Common myeloid progenitor, CD34-positive (primary cell): ENCODE measurements at regions of chr15 and their contacts with region 1.

Region 1: GRCh38 chr15:101088788-101089583 is 162.9 kb downstream of the CHSY1 start:
- DNase-seq: peak; percentile 57 to 70 (median 67)
- H3K4me3 ChIP-seq: peak overlapping the region in 3 of 7 experiments; percentile 33 to 60 (median 42)
- H3K27ac ChIP-seq: no peak overlapping the region
- H3K4me1 ChIP-seq: peaks cover 5 to 38% (median 34%) of the 10 kb centered on the region in 4 experiments
- H3K27me3 ChIP-seq: no peaks in the 10 kb centered on the region

Region 2: GRCh38 chr15:100918034-100918689 is 170.8 kb before region 1 on chr15:
- CTCF ChIA-PET with region 1: no interaction called
- POLR2A ChIA-PET with region 1: no interaction called
- DNase-seq: peak; percentile 77 to 83 (median 81)
- H3K4me3 ChIP-seq: peak overlapping the region; percentile 15 to 91 (median 76)
- H3K27ac ChIP-seq: no peak overlapping the region
- H3K4me1 ChIP-seq: peaks cover 15 to 46% (median 34%) of the 10 kb centered on the region in 4 experiments
- H3K27me3 ChIP-seq: no peaks in the 10 kb centered on the region

Region 3: GRCh38 chr15:101258238-101259144 is 169.5 kb after region 1 on chr15:
- CTCF ChIA-PET with region 1: interaction called, 18 read pairs
- POLR2A ChIA-PET with region 1: no interaction called
- DNase-seq: peak; percentile 74 to 81 (median 75)
- H3K4me3 ChIP-seq: no peak overlapping the region
- H3K27ac ChIP-seq: no peak overlapping the region
- H3K4me1 ChIP-seq: peaks cover 4 to 31% (median 24%) of the 10 kb centered on the region in 4 experiments
- H3K27me3 ChIP-seq: no peaks in the 10 kb centered on the region